Heart right ventricle (tissue), 16 donors: ENCODE measurements at regions of chr9 and their contacts with region 1.

Region 1: DNA sequence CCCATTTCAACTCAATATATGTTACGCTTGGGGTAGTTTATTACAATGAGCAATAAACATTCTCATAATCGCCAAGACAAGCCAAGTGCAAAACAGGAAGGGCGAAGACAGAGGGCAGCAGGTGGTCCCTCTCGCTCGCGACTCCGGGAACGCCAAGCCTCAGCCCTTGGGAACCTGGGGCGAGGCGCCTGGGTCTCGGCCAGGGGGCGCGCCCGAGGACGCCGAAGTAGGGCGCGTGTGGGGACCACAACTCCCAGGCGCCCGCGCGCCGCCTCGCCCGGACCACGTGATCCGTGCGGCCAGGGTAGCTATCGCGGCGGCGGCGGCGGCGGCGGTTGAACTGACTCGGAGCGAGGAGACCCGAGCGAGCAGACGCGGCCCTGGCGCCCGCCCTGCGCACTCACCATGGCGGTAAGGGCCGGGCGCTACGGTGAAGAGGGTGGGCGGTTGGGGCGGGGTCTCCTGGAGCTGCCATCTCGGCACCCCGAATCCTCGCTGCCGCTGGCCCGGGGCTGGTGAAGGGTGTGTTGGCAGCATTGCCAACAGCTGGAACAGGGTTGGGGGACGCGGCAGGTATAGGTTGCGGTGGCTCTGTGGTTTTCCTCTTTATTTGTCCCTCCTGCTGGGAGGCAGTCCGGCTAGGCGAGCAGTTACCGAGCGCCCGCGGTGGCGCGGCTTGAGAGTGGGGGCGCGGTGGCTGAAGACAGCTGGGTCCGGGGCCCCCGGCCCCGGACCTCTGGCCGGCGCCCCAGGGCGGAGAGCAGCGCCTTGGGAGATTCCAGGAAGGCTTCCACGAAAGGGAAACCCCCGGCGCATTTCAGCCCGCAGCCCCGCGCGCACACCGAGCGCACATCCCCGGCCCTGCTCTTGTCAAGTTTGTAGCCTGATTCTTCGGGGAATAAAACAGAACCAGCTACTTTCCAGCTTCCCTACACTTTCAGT is at the start of gene SLC31A2:
- DNase-seq: peak; percentile 84 to 93
- ATAC-seq: peak; percentile 95 to 98 (median 96)
- H3K4me3 ChIP-seq: peak within 1 kb of the TSS; percentile 71 to 99 (median 94)
- H3K27ac ChIP-seq: peak within 1 kb of the TSS; percentile 57 to 97 (median 80)
- H3K4me1 ChIP-seq: peaks cover 2 to 56% (median 21%) of the 10 kb centered on the region in 9 donors
- H3K27me3 ChIP-seq: peaks cover 0 to 5% (median 0%) of the 10 kb centered on the region in 7 donors
- CTCF ChIP-seq: peak in 8 of 9 donors; percentile 16 to 67 (median 46)
- total RNA-seq, gene SLC31A2: 6.8 to 19.3 (median 10.2) TPM

Region 2: DNA sequence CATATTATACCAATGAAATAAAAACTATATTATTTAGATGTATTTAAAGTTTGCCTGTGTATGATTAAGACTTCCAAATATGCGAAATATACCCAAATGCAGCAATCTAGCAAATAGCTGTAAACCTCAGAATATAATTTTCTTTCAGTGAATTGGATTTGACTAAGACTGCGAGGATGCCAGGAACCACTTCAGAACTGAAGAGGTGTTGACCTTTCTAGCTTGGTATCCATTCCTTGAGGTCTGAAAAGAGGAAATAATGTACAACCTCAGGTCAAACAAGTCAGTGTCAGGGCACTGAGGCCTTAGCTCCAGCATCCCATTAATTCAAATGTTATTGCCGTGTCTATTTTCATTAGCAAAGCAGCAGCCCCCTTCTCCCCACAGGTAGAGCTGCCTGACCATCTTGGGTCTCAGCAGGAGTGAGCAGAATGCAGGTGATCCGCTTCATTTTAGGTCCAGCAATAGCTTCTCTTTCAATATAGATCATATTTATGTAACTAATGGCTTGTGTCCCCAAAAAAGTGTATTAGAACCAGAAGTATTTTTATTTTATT is 564.3 kb before region 1 on chr9:
- intact Hi-C with region 1: no loop called
- DNase-seq: no peak
- ATAC-seq: no peak
- H3K4me3 ChIP-seq: no peak overlapping the region
- H3K27ac ChIP-seq: no peak overlapping the region
- H3K4me1 ChIP-seq: no peaks in the 10 kb centered on the region
- H3K27me3 ChIP-seq: no peaks in the 10 kb centered on the region
- CTCF ChIP-seq: no peak

Region 3: GRCh38 chr9:112831281-112831851 is 319.6 kb before region 1 on chr9:
- intact Hi-C with region 1: no loop called
- DNase-seq: peak; percentile 36 to 38
- ATAC-seq: peak; percentile 74 to 90 (median 83)
- H3K4me3 ChIP-seq: no peak overlapping the region
- H3K27ac ChIP-seq: peak overlapping the region in 8 of 10 donors; percentile 6 to 54 (median 24)
- H3K4me1 ChIP-seq: peaks cover 0 to 18% (median 9%) of the 10 kb centered on the region in 9 donors
- H3K27me3 ChIP-seq: no peaks in the 10 kb centered on the region
- CTCF ChIP-seq: no peak

Region 4: GRCh38 chr9:113221003-113221799 is 70.3 kb after region 1 on chr9 and contains the starts of genes FKBP15 and SLC31A1:
- intact Hi-C with region 1: loop called in 2 of 10 experiments (anchors 5 to 10 kb)
- DNase-seq: peak; percentile 98
- ATAC-seq: peak; percentile 99 to 100 (median 100)
- H3K4me3 ChIP-seq: peak within 1 kb of the TSS; percentile 62 to 93 (median 86)
- H3K27ac ChIP-seq: peak within 1 kb of the TSS; percentile 47 to 96 (median 88)
- H3K4me1 ChIP-seq: peaks cover 11 to 83% (median 53%) of the 10 kb centered on the region in 9 donors
- H3K27me3 ChIP-seq: no peaks in the 10 kb centered on the region
- CTCF ChIP-seq: peak in 1 of 9 donors; percentile 14
- total RNA-seq, gene FKBP15: 16.3 to 27.9 (median 20.1) TPM
- total RNA-seq, gene SLC31A1: 9.3 to 18.4 (median 10.9) TPM

Region 5: GRCh38 chr9:113275157-113276131 is 124.5 kb after region 1 on chr9 and contains the starts of genes CDC26 and PRPF4:
- intact Hi-C with region 1: no loop called
- DNase-seq: peak; percentile 96 to 98
- ATAC-seq: peak; percentile 98 to 99 (median 98)
- H3K4me3 ChIP-seq: peak within 1 kb of the TSS; percentile 36 to 89 (median 78)
- H3K27ac ChIP-seq: peak within 1 kb of the TSS; percentile 63 to 95 (median 90)
- H3K4me1 ChIP-seq: peaks cover 5 to 50% (median 23%) of the 10 kb centered on the region in 9 donors
- H3K27me3 ChIP-seq: no peaks in the 10 kb centered on the region
- CTCF ChIP-seq: no peak
- total RNA-seq, gene CDC26: 26.7 to 39.7 (median 30.8) TPM
- total RNA-seq, gene PRPF4: 10.7 to 17.2 (median 13.3) TPM

Region 6: DNA sequence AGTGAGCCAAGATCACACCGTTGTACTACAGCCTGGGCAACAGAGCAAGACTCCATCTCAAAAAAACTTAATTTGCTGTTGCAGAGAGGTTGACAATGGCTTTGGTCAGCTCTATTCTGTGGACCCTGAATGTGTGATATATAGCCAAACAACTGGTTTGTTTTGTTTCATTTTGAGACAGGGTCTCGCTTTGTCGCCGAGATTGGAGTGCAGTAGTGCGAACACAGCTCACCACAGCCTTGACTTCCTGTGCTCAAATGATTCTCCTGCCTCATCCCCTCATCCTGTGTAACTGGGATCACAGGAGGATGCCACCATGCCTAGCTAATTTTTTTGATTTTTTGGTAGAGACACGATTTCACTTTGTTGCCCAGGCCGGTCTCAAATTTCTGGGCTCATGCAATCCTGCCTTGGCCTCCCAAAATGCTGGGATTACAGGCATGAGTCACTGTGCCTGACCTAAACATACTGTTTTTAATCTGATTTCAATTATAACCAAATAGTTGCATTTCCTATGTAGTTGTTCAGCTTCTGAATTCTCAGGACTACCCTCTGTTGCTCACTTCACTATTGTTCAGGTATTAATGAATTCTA is 142.4 kb after region 1 on chr9:
- intact Hi-C with region 1: no loop called
- DNase-seq: no peak
- ATAC-seq: no peak
- H3K4me3 ChIP-seq: no peak overlapping the region
- H3K27ac ChIP-seq: no peak overlapping the region
- H3K4me1 ChIP-seq: peaks cover 0 to 15% (median 0%) of the 10 kb centered on the region in 9 donors
- H3K27me3 ChIP-seq: no peaks in the 10 kb centered on the region
- CTCF ChIP-seq: no peak